CD14-positive monocyte (primary cell): ENCODE measurements at regions of chr9 and their contacts with region 1.

Region 1: DNA sequence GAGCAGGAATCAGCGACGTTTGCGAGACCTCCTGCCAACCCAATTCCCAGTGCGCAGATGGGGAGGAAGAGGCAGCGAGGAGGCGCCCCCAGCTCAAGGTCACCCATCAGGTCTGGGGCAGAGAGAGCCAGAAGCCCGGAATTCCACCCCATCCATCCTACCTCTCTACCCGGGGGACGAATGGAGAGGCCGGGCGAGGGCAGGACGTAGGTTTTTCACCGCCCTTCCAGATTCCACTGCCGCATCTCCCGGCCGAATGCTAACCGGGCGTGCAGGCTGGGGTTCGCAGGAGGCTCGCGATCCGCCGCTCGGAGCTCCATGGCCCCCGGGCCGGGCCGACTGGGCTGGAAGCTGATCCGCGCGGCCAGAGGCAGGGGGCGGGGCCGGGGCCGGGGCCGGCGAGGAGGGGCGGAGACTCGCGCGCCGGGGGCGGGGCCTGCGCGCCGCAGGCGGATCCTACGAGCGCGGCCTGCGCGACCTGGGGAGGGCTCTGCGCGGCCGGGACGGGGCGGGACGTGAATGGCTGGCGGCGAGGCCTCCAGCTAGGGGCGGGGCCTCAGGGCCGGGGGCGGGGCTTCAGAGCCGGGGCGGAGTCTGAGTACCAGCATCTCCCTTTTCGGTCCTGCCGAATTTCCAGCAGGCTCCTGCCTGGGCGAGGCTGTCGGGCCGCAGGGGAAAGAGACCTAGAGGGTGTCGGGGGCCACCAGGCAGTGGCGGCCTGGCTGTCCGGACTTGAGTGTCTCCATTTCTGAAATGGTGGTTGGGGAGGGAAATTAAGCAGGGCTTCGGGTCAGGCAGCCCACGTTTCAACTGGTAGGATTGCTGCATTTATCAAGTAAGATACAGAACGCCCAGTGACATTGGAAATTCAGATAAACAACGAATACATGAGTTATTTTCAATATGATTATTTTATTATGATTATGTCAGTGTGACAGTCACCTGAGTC is at the start of gene ST6GALNAC4:
- DNase-seq: peak; percentile 90 to 94 (median 91)
- H3K4me3 ChIP-seq: peak within 1 kb of the TSS; percentile 54 to 92 (median 55)
- H3K4me3 Mint-ChIP-seq: peak within 1 kb of the TSS; percentile 81 to 86
- H3K27ac ChIP-seq: peak within 1 kb of the TSS; percentile 85 to 93
- H3K27ac Mint-ChIP-seq: peak within 1 kb of the TSS; percentile 81 to 100 (median 97)
- H3K4me1 ChIP-seq: peaks cover 56 to 66% of the 10 kb centered on the region in 2 donors
- H3K4me1 Mint-ChIP-seq: peaks cover 64% of the 10 kb centered on the region
- H3K27me3 ChIP-seq: peaks cover 0 to 3% of the 10 kb centered on the region in 2 donors
- H3K27me3 Mint-ChIP-seq: peaks cover 3 to 13% (median 7%) of the 10 kb centered on the region in 3 donors
- CTCF ChIP-seq: no peak
- polyA plus RNA-seq, gene ST6GALNAC4: 8.9 to 14.0 (median 10.3) TPM

Region 2: GRCh38 chr9:127503947-127504782 is 412.8 kb before region 1 on chr9:
- intact Hi-C with region 1: loop called (anchors 5 kb)
- DNase-seq: peak; percentile 73 to 80 (median 79)
- H3K4me3 ChIP-seq: no peak overlapping the region
- H3K4me3 Mint-ChIP-seq: no peak overlapping the region
- H3K27ac ChIP-seq: peak overlapping the region; percentile 2 to 50
- H3K27ac Mint-ChIP-seq: peak overlapping the region in 5 of 7 donors; percentile 5 to 48 (median 46)
- H3K4me1 ChIP-seq: no peaks in the 10 kb centered on the region
- H3K4me1 Mint-ChIP-seq: no peaks in the 10 kb centered on the region
- H3K27me3 ChIP-seq: no peaks in the 10 kb centered on the region
- H3K27me3 Mint-ChIP-seq: peaks cover 0 to 4% (median 2%) of the 10 kb centered on the region in 3 donors
- CTCF ChIP-seq: peak; percentile 90

Region 3: GRCh38 chr9:127586537-127586936 is 330.4 kb before region 1 on chr9:
- intact Hi-C with region 1: loop called in 1 of 2 experiments (anchors 10 kb)
- DNase-seq: peak; percentile 67 to 85 (median 81)
- H3K4me3 ChIP-seq: no peak overlapping the region
- H3K4me3 Mint-ChIP-seq: peak overlapping the region in 1 of 2 donors; percentile 56
- H3K27ac ChIP-seq: peak overlapping the region in 1 of 2 donors; percentile 72
- H3K27ac Mint-ChIP-seq: peak overlapping the region in 4 of 7 donors; percentile 76 to 91 (median 85)
- H3K4me1 ChIP-seq: peaks cover 44 to 45% of the 10 kb centered on the region in 2 donors
- H3K4me1 Mint-ChIP-seq: peaks cover 41% of the 10 kb centered on the region
- H3K27me3 ChIP-seq: no peaks in the 10 kb centered on the region
- H3K27me3 Mint-ChIP-seq: peaks cover 4 to 15% (median 8%) of the 10 kb centered on the region in 3 donors
- CTCF ChIP-seq: peak; percentile 83

Region 4: GRCh38 chr9:127779136-127779981 is 137.6 kb before region 1 on chr9:
- intact Hi-C with region 1: loop called in 1 of 2 experiments (anchors 5 kb)
- DNase-seq: peak; percentile 89 to 95 (median 94)
- H3K4me3 ChIP-seq: peak overlapping the region; percentile 74 to 98 (median 91)
- H3K4me3 Mint-ChIP-seq: peak overlapping the region; percentile 99 to 100
- H3K27ac ChIP-seq: peak overlapping the region; percentile 96 to 98
- H3K27ac Mint-ChIP-seq: peak overlapping the region; percentile 93 to 99 (median 98)
- H3K4me1 ChIP-seq: peaks cover 84 to 87% of the 10 kb centered on the region in 2 donors
- H3K4me1 Mint-ChIP-seq: peaks cover 75% of the 10 kb centered on the region
- H3K27me3 ChIP-seq: no peaks in the 10 kb centered on the region
- H3K27me3 Mint-ChIP-seq: peaks cover 0 to 9% (median 0%) of the 10 kb centered on the region in 3 donors
- CTCF ChIP-seq: no peak

Region 5: DNA sequence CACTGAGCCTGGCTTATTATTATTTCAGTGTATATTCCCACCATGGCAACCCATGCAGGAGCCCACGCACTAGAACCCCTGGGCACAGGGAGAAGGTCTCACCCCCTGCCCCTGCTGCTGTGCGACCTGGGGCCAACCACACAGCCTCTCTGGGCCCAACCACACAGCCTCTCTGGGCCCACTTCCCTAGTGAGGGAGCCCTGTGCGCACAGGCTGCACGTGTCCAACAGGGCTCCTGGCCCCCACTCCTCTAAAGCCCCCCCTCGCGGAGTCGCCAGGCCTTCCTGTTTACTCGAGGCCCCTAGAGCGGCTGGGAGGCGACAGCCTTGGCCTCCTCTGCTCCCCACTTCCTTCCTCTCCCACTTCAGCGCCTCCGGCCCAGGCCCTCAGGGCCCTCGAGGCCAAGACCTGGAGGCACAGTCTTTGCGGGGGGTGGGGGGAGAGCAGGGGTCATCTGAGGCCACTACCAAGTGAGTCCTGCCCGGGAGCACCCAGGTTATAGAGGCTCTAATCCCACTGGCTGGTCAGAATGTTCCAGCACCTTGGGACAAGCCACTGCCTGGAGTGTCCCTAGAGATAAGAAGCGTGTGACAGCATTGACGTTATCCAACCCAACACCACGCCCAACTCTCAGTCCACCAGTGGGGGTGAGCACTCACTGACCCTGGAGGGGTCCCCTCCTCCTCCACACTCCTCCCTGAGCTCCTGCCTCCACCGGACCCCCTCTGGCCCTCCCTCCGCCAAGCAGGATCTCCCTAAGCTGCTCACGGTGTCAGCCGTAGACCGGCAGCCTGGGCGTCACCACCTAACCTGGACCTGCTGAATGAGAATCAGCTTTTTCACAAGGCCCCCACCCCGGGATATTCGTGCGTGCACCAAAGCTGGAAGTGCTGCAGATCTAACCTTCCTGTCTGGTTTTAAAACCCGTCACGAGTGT is 54.6 kb before region 1 on chr9:
- intact Hi-C with region 1: loop called in 1 of 2 experiments (anchors 5 kb)
- DNase-seq: peak; percentile 89 to 95 (median 93)
- H3K4me3 ChIP-seq: peak overlapping the region in 1 of 3 experiments; percentile 16
- H3K4me3 Mint-ChIP-seq: peak overlapping the region in 1 of 2 donors; percentile 34
- H3K27ac ChIP-seq: peak overlapping the region; percentile 90 to 92
- H3K27ac Mint-ChIP-seq: peak overlapping the region; percentile 94 to 98 (median 98)
- H3K4me1 ChIP-seq: peaks cover 57 to 63% of the 10 kb centered on the region in 2 donors
- H3K4me1 Mint-ChIP-seq: peaks cover 62% of the 10 kb centered on the region
- H3K27me3 ChIP-seq: no peaks in the 10 kb centered on the region
- H3K27me3 Mint-ChIP-seq: peaks cover 0 to 7% (median 1%) of the 10 kb centered on the region in 3 donors
- CTCF ChIP-seq: no peak

Region 6: GRCh38 chr9:127899128-127899946 is 17.6 kb before region 1 on chr9 and contains the start of gene ST6GALNAC6:
- intact Hi-C with region 1: loop called in 1 of 2 experiments (anchors 2 kb)
- DNase-seq: peak; percentile 57 to 66 (median 61)
- H3K4me3 ChIP-seq: peak within 1 kb of the TSS; percentile 62 to 84 (median 83)
- H3K4me3 Mint-ChIP-seq: peak within 1 kb of the TSS; percentile 82 to 93
- H3K27ac ChIP-seq: peak within 1 kb of the TSS in 1 of 2 donors; percentile 33
- H3K27ac Mint-ChIP-seq: peak within 1 kb of the TSS in 4 of 7 donors; percentile 50 to 81 (median 64)
- H3K4me1 ChIP-seq: peaks cover 37 to 46% of the 10 kb centered on the region in 2 donors
- H3K4me1 Mint-ChIP-seq: peaks cover 32% of the 10 kb centered on the region
- H3K27me3 ChIP-seq: no peaks in the 10 kb centered on the region
- H3K27me3 Mint-ChIP-seq: peaks cover 1 to 9% (median 3%) of the 10 kb centered on the region in 3 donors
- CTCF ChIP-seq: no peak
- polyA plus RNA-seq, gene ST6GALNAC6: 8.2 to 14.4 (median 12.0) TPM